ENCODE measurements at regions of chr13 and their contacts with region 1.

Region 1: GRCh38 chr13:27620377-27621115 is at the start of gene LNX2:
- DNase-seq: peak; percentile 97
- ATAC-seq: peak; percentile 90
- H3K4me3 Mint-ChIP-seq: peak within 1 kb of the TSS; percentile 93
- H3K27ac Mint-ChIP-seq: peak within 1 kb of the TSS; percentile 95
- H3K4me1 Mint-ChIP-seq: peaks cover 44% of the 10 kb centered on the region
- H3K27me3 Mint-ChIP-seq: no peaks in the 10 kb centered on the region
- total RNA-seq, gene LNX2: 8.0 to 8.3 TPM

Region 2: DNA sequence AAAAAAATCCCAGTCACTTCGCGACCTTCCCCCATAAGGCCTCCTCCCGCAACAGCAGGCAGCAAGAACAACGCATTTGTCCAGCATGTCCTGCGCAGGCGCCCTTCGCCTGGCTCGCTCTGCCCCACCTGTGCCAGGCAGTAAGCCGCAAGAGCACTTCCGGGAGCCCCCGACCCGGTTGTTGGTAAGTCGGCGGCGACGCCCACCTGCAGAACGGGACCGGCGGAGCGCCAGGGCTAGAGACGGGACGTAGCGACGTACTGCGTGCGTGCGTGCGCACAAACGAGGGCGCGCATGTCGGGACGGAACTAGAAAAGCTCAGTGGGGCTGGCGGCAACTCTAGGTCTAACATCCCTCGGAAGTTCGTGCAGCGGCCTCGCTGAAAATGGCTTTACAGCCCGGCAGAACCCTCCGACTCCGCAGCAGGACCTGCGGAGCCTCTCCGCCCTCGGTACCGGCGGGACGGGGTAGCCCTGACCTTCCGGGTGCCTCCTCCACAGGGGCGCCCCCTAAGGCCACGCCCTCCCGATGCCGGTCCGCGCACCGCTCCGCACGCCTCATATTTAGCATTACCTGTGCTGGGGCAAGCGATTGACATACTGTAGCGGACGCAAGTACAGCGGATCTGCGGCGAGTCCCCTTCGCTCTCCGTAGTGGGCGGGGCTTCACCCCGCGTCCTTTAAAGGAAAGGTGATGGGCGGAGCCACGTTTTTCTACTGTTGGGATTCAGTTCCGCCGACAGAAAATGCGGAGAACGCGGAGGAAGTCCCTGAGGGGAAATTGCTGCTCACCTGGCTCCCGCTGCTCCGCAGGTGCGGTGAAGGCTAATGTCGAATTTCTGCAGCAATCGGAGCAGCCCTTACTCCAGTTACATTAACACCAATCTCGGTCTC is 170.4 kb before region 1 on chr13 and contains the start of gene MTIF3:
- POLR2A ChIA-PET with region 1: interaction called, 24 read pairs
- DNase-seq: peak; percentile 94
- ATAC-seq: peak; percentile 93
- H3K4me3 Mint-ChIP-seq: peak within 1 kb of the TSS; percentile 94
- H3K27ac Mint-ChIP-seq: peak within 1 kb of the TSS; percentile 95
- H3K4me1 Mint-ChIP-seq: peaks cover 47% of the 10 kb centered on the region
- H3K27me3 Mint-ChIP-seq: peaks cover 2% of the 10 kb centered on the region
- total RNA-seq, gene MTIF3: 51.5 to 60.4 TPM

Region 3: DNA sequence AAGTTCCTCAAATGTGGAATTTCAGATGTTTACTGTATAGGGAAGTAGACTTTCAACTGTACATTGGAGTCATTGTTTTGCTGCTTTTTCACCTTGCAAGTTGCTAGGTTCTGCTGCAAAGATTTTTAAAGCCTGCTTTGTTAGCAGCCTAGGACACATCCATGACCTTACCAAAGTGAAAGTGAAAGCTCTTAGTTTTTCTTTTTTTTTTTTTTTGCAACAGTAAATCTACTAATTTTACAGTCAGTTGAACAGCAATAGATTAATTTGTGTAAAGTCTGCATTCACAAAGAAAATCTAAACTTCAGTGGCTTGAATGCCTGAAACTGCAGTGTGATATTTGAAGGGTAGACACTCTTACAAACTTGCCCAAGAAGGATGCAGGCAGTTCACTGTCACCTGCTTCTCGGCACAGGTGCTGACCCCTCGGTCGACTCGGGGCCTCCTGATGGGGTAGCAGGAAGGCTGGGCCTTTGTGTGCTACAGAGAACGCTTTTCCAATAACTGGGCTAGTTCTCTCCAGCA is 165.2 kb before region 1 on chr13:
- POLR2A ChIA-PET with region 1: interaction called, 24 read pairs
- DNase-seq: peak; percentile 41
- ATAC-seq: peak; percentile 47
- H3K4me3 Mint-ChIP-seq: peak overlapping the region; percentile 92
- H3K27ac Mint-ChIP-seq: peak overlapping the region; percentile 97
- H3K4me1 Mint-ChIP-seq: peaks cover 19% of the 10 kb centered on the region
- H3K27me3 Mint-ChIP-seq: peaks cover 5% of the 10 kb centered on the region